Activated T-helper 1 cell treated with anti-CD3 and anti-CD28 coated beads, Interleukin-12 subunit alpha, Interleukin-12 subunit beta, Interleukin-2, Interleukin-4 antibody, amounts not matched to agents 30 ng/mL and 10 ng/mL and 1 ng/mL, durations not matched to agents 14 hours and 24 hours and 36 hours (primary cell): ENCODE measurements at regions of chr7 and their contacts with region 1.

Region 1: DNA sequence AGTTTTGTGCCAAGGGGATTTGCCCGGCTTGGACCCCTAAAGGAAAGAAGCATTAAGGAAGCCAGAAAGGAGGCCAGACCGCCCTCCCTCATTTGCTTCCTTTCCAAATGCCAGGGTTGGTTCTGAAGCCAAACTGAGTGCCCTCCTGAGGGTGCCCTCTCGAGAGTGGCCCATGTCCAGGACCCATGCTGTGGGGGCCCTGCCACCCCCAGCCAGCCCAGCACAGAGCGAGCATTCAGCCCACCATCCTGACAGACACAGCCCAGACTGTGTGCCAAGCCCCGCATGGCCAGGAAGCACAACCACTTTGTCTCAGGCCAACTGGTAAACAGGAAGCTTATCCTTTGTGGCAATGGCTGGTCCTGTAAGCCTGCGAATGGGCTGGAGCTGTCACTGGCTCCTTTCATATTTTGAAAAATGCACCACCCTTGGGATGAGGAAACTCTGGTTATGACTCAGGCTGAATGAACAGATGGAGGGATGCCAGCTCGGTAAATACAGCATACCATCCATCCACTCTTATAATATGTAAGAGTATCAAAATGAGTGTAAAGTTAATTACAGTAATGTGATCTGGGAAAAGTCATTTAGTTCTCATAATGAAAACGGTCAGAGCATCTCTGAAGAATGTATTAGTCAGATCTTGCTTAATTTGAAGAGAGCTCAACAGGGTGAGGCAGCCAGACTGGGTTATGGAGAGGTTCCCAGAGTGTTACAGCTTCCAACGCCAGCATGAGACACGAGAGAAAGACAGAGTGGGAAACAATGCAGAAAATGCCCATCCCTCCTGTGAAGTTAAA is 65.0 kb downstream of the STK17A start:
- DNase-seq: no peak
- H3K4me3 Mint-ChIP-seq: peak overlapping the region; percentile 75
- H3K27ac Mint-ChIP-seq: peak overlapping the region; percentile 98
- H3K4me1 Mint-ChIP-seq: peaks cover 95% of the 10 kb centered on the region
- H3K27me3 Mint-ChIP-seq: no peaks in the 10 kb centered on the region

Region 2: GRCh38 chr7:43553999-43554398 is 93.9 kb before region 1 on chr7:
- intact Hi-C with region 1: no loop called
- DNase-seq: no peak
- H3K4me3 Mint-ChIP-seq: peak overlapping the region; percentile 6
- H3K27ac Mint-ChIP-seq: no peak overlapping the region
- H3K4me1 Mint-ChIP-seq: peaks cover 17% of the 10 kb centered on the region
- H3K27me3 Mint-ChIP-seq: peaks cover 8% of the 10 kb centered on the region

Region 3: GRCh38 chr7:43582503-43583423 is 65.1 kb before region 1 on chr7 and contains the start of gene STK17A:
- intact Hi-C with region 1: loop called (anchors 1 kb)
- DNase-seq: peak; percentile 93
- H3K4me3 Mint-ChIP-seq: peak within 1 kb of the TSS; percentile 96
- H3K27ac Mint-ChIP-seq: peak within 1 kb of the TSS; percentile 96
- H3K4me1 Mint-ChIP-seq: peaks cover 36% of the 10 kb centered on the region
- H3K27me3 Mint-ChIP-seq: peaks cover 21% of the 10 kb centered on the region
- total RNA-seq, gene STK17A: 44.8 and 47.8 TPM in 2 replicates

Region 4: GRCh38 chr7:43612599-43613589 is 35.0 kb before region 1 on chr7:
- intact Hi-C with region 1: loop called (anchors 1 kb)
- DNase-seq: no peak
- H3K4me3 Mint-ChIP-seq: peak overlapping the region; percentile 8
- H3K27ac Mint-ChIP-seq: peak overlapping the region; percentile 77
- H3K4me1 Mint-ChIP-seq: peaks cover 58% of the 10 kb centered on the region
- H3K27me3 Mint-ChIP-seq: no peaks in the 10 kb centered on the region

Region 5: DNA sequence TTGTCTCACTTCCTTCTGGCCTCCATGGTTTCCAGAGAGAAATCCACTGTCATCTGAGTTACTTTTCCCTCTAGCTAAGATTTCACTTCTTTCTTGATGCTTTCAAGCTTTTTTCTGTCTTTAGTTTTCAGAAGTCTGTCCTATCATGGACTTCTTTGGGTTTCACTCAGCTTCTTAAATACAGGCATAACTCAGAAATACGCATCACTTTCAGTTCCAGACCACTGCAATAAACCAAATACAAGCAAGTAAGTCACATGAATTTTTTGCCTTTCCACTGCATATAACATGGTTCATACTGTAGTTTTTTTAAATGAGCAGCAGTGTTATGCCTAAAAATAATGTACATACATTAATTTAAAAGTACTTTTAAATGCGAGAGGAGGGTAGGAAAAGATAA is 16.3 kb before region 1 on chr7:
- intact Hi-C with region 1: loop called (anchors 2 kb)
- DNase-seq: no peak
- H3K4me3 Mint-ChIP-seq: peak overlapping the region; percentile 50
- H3K27ac Mint-ChIP-seq: peak overlapping the region; percentile 81
- H3K4me1 Mint-ChIP-seq: peaks cover 78% of the 10 kb centered on the region
- H3K27me3 Mint-ChIP-seq: no peaks in the 10 kb centered on the region

Region 6: GRCh38 chr7:43658718-43659548 is 11.1 kb after region 1 on chr7:
- intact Hi-C with region 1: loop called (anchors 1 kb)
- DNase-seq: no peak
- H3K4me3 Mint-ChIP-seq: peak overlapping the region; percentile 66
- H3K27ac Mint-ChIP-seq: peak overlapping the region; percentile 95
- H3K4me1 Mint-ChIP-seq: peaks cover 49% of the 10 kb centered on the region
- H3K27me3 Mint-ChIP-seq: no peaks in the 10 kb centered on the region

Region 7: DNA sequence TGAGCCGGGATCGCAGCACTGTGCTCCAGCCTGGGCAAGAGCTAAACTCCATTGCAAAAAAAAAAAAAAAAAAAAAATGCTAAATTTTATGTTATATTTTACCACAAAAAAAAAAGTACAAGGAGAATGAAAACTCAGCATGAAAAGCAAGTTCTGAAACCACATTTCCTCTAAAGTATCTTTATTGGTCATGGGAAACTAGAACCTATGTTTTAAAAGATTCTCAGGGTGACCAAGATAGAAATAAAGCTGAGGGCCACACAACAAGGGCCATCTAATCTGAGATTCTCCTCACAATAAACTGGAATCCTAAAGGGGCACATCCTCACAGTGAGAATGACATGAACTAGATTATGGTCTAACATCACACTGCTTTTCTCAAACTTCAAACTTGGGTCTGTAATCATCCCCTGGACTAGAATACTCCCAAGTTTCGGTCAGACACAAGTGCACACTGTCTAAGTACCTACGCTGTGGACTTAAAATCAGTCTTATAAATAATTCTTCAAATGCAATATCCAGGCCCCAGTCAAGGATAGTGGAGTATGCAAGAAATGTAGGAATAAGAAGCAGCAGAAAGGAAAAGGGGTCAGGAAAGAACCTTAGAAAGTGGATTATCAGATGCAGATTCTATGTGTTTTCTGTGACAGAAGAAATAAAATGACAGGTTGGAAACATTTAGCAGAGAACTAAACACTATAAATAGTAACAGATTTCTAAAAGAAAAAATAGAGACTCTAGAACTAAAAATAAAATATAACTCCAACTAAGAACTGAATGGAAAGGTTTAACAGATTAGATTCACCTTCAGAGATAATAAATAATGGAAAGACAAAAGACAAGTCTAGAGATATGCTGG is 31.6 kb after region 1 on chr7:
- intact Hi-C with region 1: loop called (anchors 1 kb)
- DNase-seq: no peak
- H3K4me3 Mint-ChIP-seq: no peak overlapping the region
- H3K27ac Mint-ChIP-seq: peak overlapping the region; percentile 15
- H3K4me1 Mint-ChIP-seq: peaks cover 50% of the 10 kb centered on the region
- H3K27me3 Mint-ChIP-seq: no peaks in the 10 kb centered on the region